ENCODE measurements at regions of chr12 and their contacts with region 1.

Region 1: GRCh38 chr12:116599285-116600136 is 40.3 kb downstream of the MAP1LC3B2 start:
- DNase-seq: peak; percentile 73
- H3K4me3 Mint-ChIP-seq: no peak overlapping the region
- H3K27ac Mint-ChIP-seq: no peak overlapping the region
- H3K4me1 Mint-ChIP-seq: peaks cover 41% of the 10 kb centered on the region
- H3K27me3 Mint-ChIP-seq: peaks cover 10% of the 10 kb centered on the region

Region 2: GRCh38 chr12:116142936-116143898 is 456.3 kb before region 1 on chr12:
- CTCF ChIA-PET with region 1: interaction called, 23 read pairs
- DNase-seq: no peak
- H3K4me3 Mint-ChIP-seq: no peak overlapping the region
- H3K27ac Mint-ChIP-seq: peak overlapping the region; percentile 52
- H3K4me1 Mint-ChIP-seq: peaks cover 42% of the 10 kb centered on the region
- H3K27me3 Mint-ChIP-seq: no peaks in the 10 kb centered on the region

Region 3: DNA sequence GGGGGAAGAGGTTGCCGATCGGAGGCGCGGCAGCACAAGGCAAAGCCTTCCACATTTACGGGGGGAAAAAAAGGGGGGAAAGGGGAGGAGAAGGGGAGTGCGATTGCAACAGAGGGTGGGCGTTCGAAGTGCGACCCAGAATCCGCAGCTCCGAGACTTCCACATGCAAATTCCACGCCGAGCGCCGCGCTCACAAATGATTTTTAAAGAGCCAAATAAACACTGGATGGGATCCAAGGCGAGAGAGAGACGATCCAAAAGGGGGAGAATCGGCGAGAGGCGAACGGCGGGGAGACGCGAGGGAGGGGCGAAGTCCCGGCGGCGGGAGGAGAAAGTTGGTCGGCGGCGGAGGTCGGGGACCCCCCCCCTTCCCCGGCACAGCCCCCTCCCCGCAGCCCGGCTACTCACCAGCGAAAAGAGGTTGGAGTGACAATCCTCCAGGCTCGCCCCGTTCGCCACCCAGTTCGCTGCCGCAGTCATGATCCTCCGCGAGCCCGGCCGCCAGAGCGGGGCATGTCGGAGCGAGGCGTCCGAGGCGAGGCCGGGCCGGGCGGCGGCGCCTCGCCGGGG is 322.8 kb before region 1 on chr12:
- CTCF ChIA-PET with region 1: interaction called, 12 read pairs
- DNase-seq: peak; percentile 85
- H3K4me3 Mint-ChIP-seq: peak overlapping the region; percentile 88
- H3K27ac Mint-ChIP-seq: peak overlapping the region; percentile 93
- H3K4me1 Mint-ChIP-seq: peaks cover 38% of the 10 kb centered on the region
- H3K27me3 Mint-ChIP-seq: peaks cover 11% of the 10 kb centered on the region

Region 4: DNA sequence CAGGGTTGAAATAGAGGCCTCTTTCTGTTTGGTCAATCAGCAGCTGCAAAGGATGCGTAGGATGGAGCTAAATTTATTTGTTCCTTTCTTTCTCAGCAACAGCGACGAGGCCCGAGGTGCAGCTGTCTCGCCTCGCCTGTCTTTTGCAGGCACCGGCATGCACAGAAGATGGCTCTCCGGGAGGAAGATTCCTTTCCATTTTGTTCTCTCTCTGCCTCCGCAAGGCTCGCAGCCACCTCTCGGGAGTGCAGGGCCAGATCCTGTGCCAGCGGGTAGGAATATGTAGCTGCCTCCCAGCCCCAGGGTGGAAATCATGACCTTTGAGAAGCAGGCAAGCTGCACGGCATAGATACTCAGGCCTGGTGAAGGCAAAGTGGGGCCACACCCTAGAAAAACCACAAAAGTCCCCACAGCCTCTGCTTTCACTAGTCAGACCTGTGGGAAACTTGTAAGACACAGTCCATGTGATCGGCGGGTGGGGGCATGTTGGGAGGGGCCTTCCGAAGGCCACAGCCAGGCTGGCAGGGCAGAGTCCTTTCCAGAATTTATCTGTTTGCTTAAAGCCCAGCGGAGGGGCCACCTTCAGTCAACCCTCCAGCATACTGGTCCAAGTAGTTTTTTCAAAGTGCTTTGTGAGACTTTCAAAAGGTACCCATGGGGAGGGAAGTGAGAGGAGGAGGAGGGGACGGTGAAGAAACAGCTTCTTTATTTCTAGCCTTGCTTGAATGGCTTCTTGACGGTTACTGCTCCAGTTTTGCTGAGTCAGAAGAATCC is 40.2 kb before region 1 on chr12 and contains the start of gene MAP1LC3B2:
- CTCF ChIA-PET with region 1: interaction called, 11 read pairs
- DNase-seq: peak; percentile 92
- H3K4me3 Mint-ChIP-seq: peak within 1 kb of the TSS; percentile 69
- H3K27ac Mint-ChIP-seq: peak within 1 kb of the TSS; percentile 100
- H3K4me1 Mint-ChIP-seq: peaks cover 39% of the 10 kb centered on the region
- H3K27me3 Mint-ChIP-seq: peaks cover 28% of the 10 kb centered on the region

Region 5: GRCh38 chr12:116609319-116610114 is 10.0 kb after region 1 on chr12:
- CTCF ChIA-PET with region 1: interaction called, 23 read pairs
- DNase-seq: peak; percentile 53
- H3K4me3 Mint-ChIP-seq: no peak overlapping the region
- H3K27ac Mint-ChIP-seq: no peak overlapping the region
- H3K4me1 Mint-ChIP-seq: peaks cover 5% of the 10 kb centered on the region
- H3K27me3 Mint-ChIP-seq: peaks cover 36% of the 10 kb centered on the region